T-cell (primary cell): ENCODE measurements at regions of chr19 and their contacts with region 1.

Region 1: GRCh38 chr19:46495787-46496101 is at the start of gene PNMA8B:
- DNase-seq: peak in 31 of 35 experiments; percentile 13 to 72 (median 40)
- ATAC-seq: peak; percentile 27 to 71 (median 42)
- H3K4me3 ChIP-seq: peak within 1 kb of the TSS in 1 of 2 donors; percentile 26
- H3K4me3 Mint-ChIP-seq: peak within 1 kb of the TSS; percentile 64 to 86 (median 79)
- H3K27ac ChIP-seq: no peak within 1 kb of the TSS
- H3K27ac Mint-ChIP-seq: peak within 1 kb of the TSS in 1 of 2 donors; percentile 31
- H3K4me1 ChIP-seq: peaks cover 5 to 39% of the 10 kb centered on the region in 2 experiments
- H3K4me1 Mint-ChIP-seq: peaks cover 16 to 21% (median 21%) of the 10 kb centered on the region in 3 donors
- H3K27me3 ChIP-seq: peaks cover 6 to 65% of the 10 kb centered on the region in 2 experiments
- H3K27me3 Mint-ChIP-seq: peaks cover 31 to 48% of the 10 kb centered on the region in 2 donors
- total RNA-seq, gene PNMA8B: 0.20 to 1.1 (median 0.44) TPM

Region 2: GRCh38 chr19:46513461-46514236 is 17.9 kb after region 1 on chr19:
- CTCF ChIA-PET with region 1: no interaction called
- POLR2A ChIA-PET with region 1: no interaction called
- DNase-seq: peak in 33 of 35 experiments; percentile 30 to 85 (median 69)
- ATAC-seq: peak; percentile 76 to 86 (median 79)
- H3K4me3 ChIP-seq: no peak overlapping the region
- H3K4me3 Mint-ChIP-seq: no peak overlapping the region
- H3K27ac ChIP-seq: no peak overlapping the region
- H3K27ac Mint-ChIP-seq: no peak overlapping the region
- H3K4me1 ChIP-seq: peaks cover 4 to 24% of the 10 kb centered on the region in 2 experiments
- H3K4me1 Mint-ChIP-seq: peaks cover 13 to 21% (median 21%) of the 10 kb centered on the region in 3 donors
- H3K27me3 ChIP-seq: peaks cover 0 to 37% of the 10 kb centered on the region in 2 experiments
- H3K27me3 Mint-ChIP-seq: peaks cover 9 to 21% of the 10 kb centered on the region in 2 donors

Region 3: GRCh38 chr19:46586303-46587001 is 90.7 kb after region 1 on chr19:
- CTCF ChIA-PET with region 1: no interaction called
- POLR2A ChIA-PET with region 1: no interaction called
- DNase-seq: no peak
- ATAC-seq: no peak
- H3K4me3 ChIP-seq: no peak overlapping the region
- H3K4me3 Mint-ChIP-seq: no peak overlapping the region
- H3K27ac ChIP-seq: no peak overlapping the region
- H3K27ac Mint-ChIP-seq: no peak overlapping the region
- H3K4me1 ChIP-seq: peaks cover 0 to 4% of the 10 kb centered on the region in 2 experiments
- H3K4me1 Mint-ChIP-seq: peaks cover 6 to 7% (median 7%) of the 10 kb centered on the region in 3 donors
- H3K27me3 ChIP-seq: no peaks in the 10 kb centered on the region
- H3K27me3 Mint-ChIP-seq: no peaks in the 10 kb centered on the region

Region 4: DNA sequence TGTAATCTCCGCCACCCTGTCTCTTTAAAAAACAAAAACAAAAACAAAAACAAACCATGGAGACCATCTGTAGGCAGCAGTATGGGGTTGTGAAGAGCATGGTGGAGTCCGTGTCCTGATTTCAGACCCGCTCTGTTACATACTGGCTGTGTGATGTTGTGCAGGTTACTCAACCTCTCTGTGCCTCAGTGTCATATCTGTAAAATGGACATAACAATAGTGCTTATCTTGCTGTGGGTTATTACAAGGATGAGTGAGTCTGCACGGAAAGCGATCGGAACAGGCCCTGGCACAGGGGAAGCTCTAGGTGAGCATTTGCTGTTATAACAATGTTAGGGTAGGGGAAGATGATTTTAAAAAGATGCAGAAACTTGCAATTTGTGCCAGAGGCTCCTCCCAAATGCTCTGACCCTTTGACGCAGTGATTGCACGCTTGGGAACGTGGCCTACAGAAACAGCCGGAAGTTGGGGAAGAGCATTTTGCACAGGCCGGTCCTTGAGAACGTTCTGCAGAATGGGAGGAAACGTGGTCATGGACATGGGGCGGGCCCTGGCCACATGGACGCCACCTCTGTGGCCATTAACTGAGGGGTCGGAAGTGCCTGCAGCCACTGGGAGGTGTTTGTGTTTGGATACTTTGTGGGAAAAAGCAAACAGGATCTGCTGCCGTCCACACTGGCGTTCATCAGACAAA is 1267.0 kb after region 1 on chr19:
- CTCF ChIA-PET with region 1: interaction called in 1 of 2 experiments, 12 read pairs
- POLR2A ChIA-PET with region 1: no interaction called
- DNase-seq: no peak
- ATAC-seq: peak in 1 of 4 experiments; percentile 5
- H3K4me3 ChIP-seq: no peak overlapping the region
- H3K4me3 Mint-ChIP-seq: no peak overlapping the region
- H3K27ac ChIP-seq: no peak overlapping the region
- H3K27ac Mint-ChIP-seq: no peak overlapping the region
- H3K4me1 ChIP-seq: no peaks in the 10 kb centered on the region
- H3K4me1 Mint-ChIP-seq: no peaks in the 10 kb centered on the region
- H3K27me3 ChIP-seq: peaks cover 0 to 3% of the 10 kb centered on the region in 2 experiments
- H3K27me3 Mint-ChIP-seq: no peaks in the 10 kb centered on the region

Region 5: DNA sequence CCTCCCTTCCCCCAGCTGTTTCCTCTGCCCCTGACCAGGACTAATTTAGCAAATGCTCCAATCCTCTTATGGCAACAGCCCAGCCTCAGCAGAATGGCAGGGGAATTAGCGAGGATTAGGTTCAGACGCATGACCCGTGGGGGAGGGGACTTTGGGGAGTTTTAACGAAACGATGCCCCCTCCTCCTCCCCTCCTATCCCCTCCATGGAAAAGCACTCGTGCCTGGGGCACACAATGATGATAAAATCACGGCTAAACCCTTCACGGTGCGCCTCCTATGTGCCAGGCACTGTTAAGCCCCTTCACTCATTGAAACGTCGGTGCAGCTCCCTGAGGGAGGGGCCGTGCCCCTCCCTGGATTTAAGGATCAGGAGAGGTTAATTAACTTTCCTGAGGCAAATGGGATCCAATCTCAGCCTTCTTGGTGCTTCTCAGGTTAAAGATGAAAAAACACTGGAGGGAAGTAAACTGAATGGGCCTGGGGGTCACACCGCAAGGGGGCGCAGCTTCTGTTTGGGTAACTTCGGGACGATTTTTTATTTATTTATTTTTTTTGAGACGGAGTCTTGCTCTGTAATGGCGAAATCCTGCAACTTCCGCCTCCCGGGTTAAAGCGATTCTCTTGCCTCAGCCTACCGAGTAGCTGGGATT is 1353.2 kb after region 1 on chr19:
- CTCF ChIA-PET with region 1: no interaction called
- POLR2A ChIA-PET with region 1: interaction called in 1 of 2 experiments, 22 read pairs
- DNase-seq: peak in 24 of 35 experiments; percentile 1 to 37 (median 12)
- ATAC-seq: no peak
- H3K4me3 ChIP-seq: no peak overlapping the region
- H3K4me3 Mint-ChIP-seq: peak overlapping the region in 1 of 3 donors; percentile 36
- H3K27ac ChIP-seq: no peak overlapping the region
- H3K27ac Mint-ChIP-seq: no peak overlapping the region
- H3K4me1 ChIP-seq: peaks cover 0 to 6% of the 10 kb centered on the region in 2 experiments
- H3K4me1 Mint-ChIP-seq: peaks cover 6 to 19% (median 13%) of the 10 kb centered on the region in 3 donors
- H3K27me3 ChIP-seq: peaks cover 14 to 60% of the 10 kb centered on the region in 2 experiments
- H3K27me3 Mint-ChIP-seq: peaks cover 53 to 59% of the 10 kb centered on the region in 2 donors